CD8-positive, alpha-beta T cell (primary cell): ENCODE measurements at regions of chr10 and their contacts with region 1.

Region 1: DNA sequence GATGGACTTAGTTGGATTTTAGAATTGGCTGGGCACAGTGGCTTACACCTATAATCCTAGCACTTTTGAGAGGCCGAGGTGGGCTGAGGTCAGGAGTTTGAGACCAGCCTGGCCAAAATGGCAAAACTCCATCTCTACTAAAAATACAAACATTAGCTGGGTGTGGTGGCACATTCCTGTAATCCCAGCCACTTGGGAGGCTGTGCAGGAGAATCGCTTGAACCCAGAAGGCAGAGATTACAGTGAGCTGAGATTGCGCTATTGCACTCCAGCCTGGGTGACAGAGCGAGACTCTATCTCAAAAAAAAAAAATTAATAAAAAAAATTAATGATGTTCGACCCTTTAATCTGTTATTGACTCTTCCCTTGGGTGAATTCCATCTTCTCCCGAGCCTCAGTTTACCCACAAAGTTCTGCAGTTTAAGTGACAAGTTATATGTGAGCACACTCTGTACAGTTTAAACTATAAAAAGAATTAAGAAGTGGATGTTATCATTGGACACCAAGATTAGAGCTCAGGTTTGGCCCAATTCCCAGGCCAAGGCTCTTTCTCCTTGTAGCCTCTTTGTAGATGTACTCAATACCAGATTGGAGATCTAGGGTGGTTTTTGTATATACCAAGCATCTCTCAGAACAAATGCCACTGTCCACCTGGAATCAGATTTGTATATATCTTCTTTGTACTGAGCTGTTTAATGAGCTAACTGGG is 15.0 kb downstream of the KAT6B start:
- DNase-seq: no peak
- ATAC-seq: no peak
- H3K4me3 ChIP-seq: no peak overlapping the region
- H3K4me3 Mint-ChIP-seq: no peak overlapping the region
- H3K27ac ChIP-seq: no peak overlapping the region
- H3K27ac Mint-ChIP-seq: peak overlapping the region; percentile 60
- H3K4me1 ChIP-seq: no peaks in the 10 kb centered on the region
- H3K4me1 Mint-ChIP-seq: peaks cover 65% of the 10 kb centered on the region
- H3K27me3 ChIP-seq: no peaks in the 10 kb centered on the region
- H3K27me3 Mint-ChIP-seq: no peaks in the 10 kb centered on the region
- CTCF ChIP-seq: no peak

Region 2: DNA sequence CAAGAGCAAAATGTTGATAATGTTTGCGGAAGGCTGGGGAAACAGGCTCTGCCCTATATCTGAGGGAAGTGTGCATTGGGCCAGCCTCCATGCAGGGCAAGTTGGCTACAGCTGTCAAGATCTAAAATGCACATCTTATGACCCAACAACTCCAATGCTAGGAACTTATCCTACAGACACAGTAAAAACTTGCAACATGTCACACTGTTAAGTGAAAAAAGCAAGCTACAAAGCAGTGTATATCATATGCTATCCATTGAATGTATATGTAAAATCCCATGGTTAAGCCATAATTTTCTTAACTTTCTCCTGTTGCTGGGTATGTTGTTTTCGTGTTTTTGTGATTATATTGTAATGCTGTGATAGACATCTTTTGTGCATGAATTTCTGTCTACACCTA is 31.3 kb before region 1 on chr10:
- CTCF ChIA-PET with region 1: no interaction called
- POLR2A ChIA-PET with region 1: no interaction called
- intact Hi-C with region 1: loop called in 1 of 2 experiments (anchors 2 kb)
- DNase-seq: no peak
- ATAC-seq: no peak
- H3K4me3 ChIP-seq: no peak overlapping the region
- H3K4me3 Mint-ChIP-seq: no peak overlapping the region
- H3K27ac ChIP-seq: no peak overlapping the region
- H3K27ac Mint-ChIP-seq: no peak overlapping the region
- H3K4me1 ChIP-seq: no peaks in the 10 kb centered on the region
- H3K4me1 Mint-ChIP-seq: no peaks in the 10 kb centered on the region
- H3K27me3 ChIP-seq: no peaks in the 10 kb centered on the region
- H3K27me3 Mint-ChIP-seq: no peaks in the 10 kb centered on the region
- CTCF ChIP-seq: no peak

Region 3: GRCh38 chr10:75117995-75118394 is 276.6 kb after region 1 on chr10:
- CTCF ChIA-PET with region 1: no interaction called
- POLR2A ChIA-PET with region 1: no interaction called
- intact Hi-C with region 1: no loop called
- DNase-seq: no peak
- ATAC-seq: no peak
- H3K4me3 ChIP-seq: no peak overlapping the region
- H3K4me3 Mint-ChIP-seq: no peak overlapping the region
- H3K27ac ChIP-seq: no peak overlapping the region
- H3K27ac Mint-ChIP-seq: peak overlapping the region; percentile 30
- H3K4me1 ChIP-seq: peaks cover 10% of the 10 kb centered on the region
- H3K4me1 Mint-ChIP-seq: peaks cover 58% of the 10 kb centered on the region
- H3K27me3 ChIP-seq: no peaks in the 10 kb centered on the region
- H3K27me3 Mint-ChIP-seq: no peaks in the 10 kb centered on the region
- CTCF ChIP-seq: no peak

Region 4: GRCh38 chr10:75910032-75910431 is 1068.6 kb after region 1 on chr10:
- CTCF ChIA-PET with region 1: no interaction called
- POLR2A ChIA-PET with region 1: no interaction called
- intact Hi-C with region 1: no loop called
- DNase-seq: no peak
- ATAC-seq: no peak
- H3K4me3 ChIP-seq: no peak overlapping the region
- H3K4me3 Mint-ChIP-seq: no peak overlapping the region
- H3K27ac ChIP-seq: no peak overlapping the region
- H3K27ac Mint-ChIP-seq: no peak overlapping the region
- H3K4me1 ChIP-seq: no peaks in the 10 kb centered on the region
- H3K4me1 Mint-ChIP-seq: no peaks in the 10 kb centered on the region
- H3K27me3 ChIP-seq: no peaks in the 10 kb centered on the region
- H3K27me3 Mint-ChIP-seq: no peaks in the 10 kb centered on the region
- CTCF ChIP-seq: no peak